CD4-positive, alpha-beta memory T cell (primary cell): ENCODE measurements at regions of chr2 and their contacts with region 1.

Region 1: DNA sequence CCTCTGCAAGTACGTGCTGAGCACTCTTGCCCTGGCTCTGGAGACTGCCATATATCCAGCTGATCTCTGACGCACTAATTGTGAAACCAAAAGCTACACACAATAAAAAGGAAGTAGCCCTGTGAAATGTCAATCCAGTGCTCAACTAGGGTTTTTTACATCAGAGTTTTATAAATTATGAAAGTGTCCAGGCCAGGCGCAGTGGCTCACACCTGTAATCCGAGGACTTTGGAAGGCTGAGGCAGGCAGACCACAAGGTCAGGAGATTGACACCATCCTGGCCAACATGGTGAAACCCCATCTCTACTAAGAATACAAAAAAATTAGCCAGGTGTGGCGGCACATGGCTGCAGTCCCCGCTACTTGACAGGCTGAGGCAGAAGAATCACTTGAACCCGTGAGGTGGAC is 24.5 kb upstream of the PEX13 start:
- DNase-seq: peak in 4 of 5 donors; percentile 46 to 61 (median 52)
- H3K4me3 ChIP-seq: peak overlapping the region; percentile 1 to 44
- H3K4me3 Mint-ChIP-seq: peak overlapping the region; percentile 71 to 80 (median 78)
- H3K27ac ChIP-seq: no peak overlapping the region
- H3K27ac Mint-ChIP-seq: peak overlapping the region; percentile 62 to 97 (median 95)
- H3K4me1 ChIP-seq: peaks cover 7% of the 10 kb centered on the region
- H3K4me1 Mint-ChIP-seq: peaks cover 4 to 12% (median 9%) of the 10 kb centered on the region in 4 donors
- H3K27me3 ChIP-seq: no peaks in the 10 kb centered on the region
- H3K27me3 Mint-ChIP-seq: no peaks in the 10 kb centered on the region

Region 2: GRCh38 chr2:60934165-60934722 is 58.7 kb before region 1 on chr2:
- CTCF ChIA-PET with region 1: no interaction called
- POLR2A ChIA-PET with region 1: no interaction called
- intact Hi-C with region 1: no loop called
- DNase-seq: no peak
- H3K4me3 ChIP-seq: no peak overlapping the region
- H3K4me3 Mint-ChIP-seq: no peak overlapping the region
- H3K27ac ChIP-seq: no peak overlapping the region
- H3K27ac Mint-ChIP-seq: peak overlapping the region in 3 of 7 donors; percentile 33 to 71 (median 43)
- H3K4me1 ChIP-seq: no peaks in the 10 kb centered on the region
- H3K4me1 Mint-ChIP-seq: peaks cover 4 to 12% (median 7%) of the 10 kb centered on the region in 4 donors
- H3K27me3 ChIP-seq: no peaks in the 10 kb centered on the region
- H3K27me3 Mint-ChIP-seq: no peaks in the 10 kb centered on the region

Region 3: GRCh38 chr2:60966507-60967405 is 26.2 kb before region 1 on chr2:
- CTCF ChIA-PET with region 1: interaction called, 5 read pairs
- POLR2A ChIA-PET with region 1: interaction called, 11 read pairs
- intact Hi-C with region 1: no loop called
- DNase-seq: no peak
- H3K4me3 ChIP-seq: no peak overlapping the region
- H3K4me3 Mint-ChIP-seq: peak overlapping the region in 7 of 8 donors; percentile 43 to 83 (median 70)
- H3K27ac ChIP-seq: no peak overlapping the region
- H3K27ac Mint-ChIP-seq: peak overlapping the region; percentile 10 to 91 (median 89)
- H3K4me1 ChIP-seq: peaks cover 47% of the 10 kb centered on the region
- H3K4me1 Mint-ChIP-seq: peaks cover 28 to 44% (median 35%) of the 10 kb centered on the region in 4 donors
- H3K27me3 ChIP-seq: no peaks in the 10 kb centered on the region
- H3K27me3 Mint-ChIP-seq: no peaks in the 10 kb centered on the region

Region 4: GRCh38 chr2:61204781-61205531 is 212.0 kb after region 1 on chr2:
- CTCF ChIA-PET with region 1: no interaction called
- POLR2A ChIA-PET with region 1: no interaction called
- intact Hi-C with region 1: no loop called
- DNase-seq: no peak
- H3K4me3 ChIP-seq: no peak overlapping the region
- H3K4me3 Mint-ChIP-seq: no peak overlapping the region
- H3K27ac ChIP-seq: no peak overlapping the region
- H3K27ac Mint-ChIP-seq: no peak overlapping the region
- H3K4me1 ChIP-seq: no peaks in the 10 kb centered on the region
- H3K4me1 Mint-ChIP-seq: no peaks in the 10 kb centered on the region
- H3K27me3 ChIP-seq: no peaks in the 10 kb centered on the region
- H3K27me3 Mint-ChIP-seq: no peaks in the 10 kb centered on the region